ENCODE measurements at regions of chr11 and their contacts with region 1.

Region 1: GRCh38 chr11:44556735-44557409 is 8.6 kb upstream of the CD82 start:
- DNase-seq: peak; percentile 74
- H3K4me3 ChIP-seq: no peak overlapping the region
- H3K27ac ChIP-seq: no peak overlapping the region
- H3K4me1 ChIP-seq: no peaks in the 10 kb centered on the region
- H3K27me3 ChIP-seq: no peaks in the 10 kb centered on the region; the same call in 1 of the 2 replicates

Region 2: GRCh38 chr11:44609001-44609782 is 52.3 kb after region 1 on chr11:
- in situ Hi-C with region 1: loop called (anchors 5 kb)
- DNase-seq: peak; percentile 14
- H3K4me3 ChIP-seq: no peak overlapping the region
- H3K27ac ChIP-seq: no peak overlapping the region
- H3K4me1 ChIP-seq: peaks cover 8% of the 10 kb centered on the region
- H3K27me3 ChIP-seq: no peaks in the 10 kb centered on the region

Region 3: DNA sequence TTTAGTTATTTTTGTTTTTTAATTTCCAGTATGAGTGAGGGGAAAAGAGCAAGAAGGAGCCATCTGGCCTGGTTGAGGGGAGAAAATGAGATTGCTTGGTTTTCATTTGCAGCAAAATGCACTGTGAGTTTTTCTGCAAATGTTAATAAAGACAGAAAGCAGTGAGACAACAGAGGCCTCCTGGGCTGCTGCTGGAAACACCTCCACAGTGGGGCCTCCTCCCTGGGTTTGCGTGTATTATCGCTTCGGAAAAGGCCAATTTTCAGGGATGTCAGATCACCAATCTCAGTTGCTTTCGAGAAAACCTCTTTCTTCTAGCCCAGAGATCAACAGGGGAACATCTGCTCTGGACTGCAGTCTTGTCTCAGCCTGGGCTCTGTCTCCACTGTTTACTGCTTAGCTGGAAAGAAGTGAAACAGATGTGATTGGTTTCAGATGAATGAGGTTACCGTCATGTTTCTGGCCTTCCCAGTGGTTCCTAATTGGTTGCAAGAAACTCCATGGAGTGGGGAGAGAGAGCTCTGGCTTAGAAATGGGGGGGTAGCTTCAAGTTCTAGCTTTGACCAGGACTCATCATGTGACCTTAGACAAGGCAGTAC is 187.2 kb after region 1 on chr11:
- in situ Hi-C with region 1: no loop called
- DNase-seq: peak; percentile 17
- H3K4me3 ChIP-seq: no peak overlapping the region
- H3K27ac ChIP-seq: no peak overlapping the region
- H3K4me1 ChIP-seq: peaks cover 4% of the 10 kb centered on the region; the same call in 1 of the 2 replicates
- H3K27me3 ChIP-seq: peaks cover 29% of the 10 kb centered on the region

Region 4: GRCh38 chr11:44916801-44917385 is 360.0 kb after region 1 on chr11:
- in situ Hi-C with region 1: no loop called
- DNase-seq: no peak
- H3K4me3 ChIP-seq: no peak overlapping the region
- H3K27ac ChIP-seq: no peak overlapping the region
- H3K4me1 ChIP-seq: no peaks in the 10 kb centered on the region
- H3K27me3 ChIP-seq: 0 out of 2 replicates have a peak, but pooled peaks cover 3% of the 10 kb centered on the region

Measured in GM23248 (cell line).